Dorsolateral prefrontal cortex (tissue), 120 donors: ENCODE measurements at regions of chr6 and their contacts with region 1.

Region 1: DNA sequence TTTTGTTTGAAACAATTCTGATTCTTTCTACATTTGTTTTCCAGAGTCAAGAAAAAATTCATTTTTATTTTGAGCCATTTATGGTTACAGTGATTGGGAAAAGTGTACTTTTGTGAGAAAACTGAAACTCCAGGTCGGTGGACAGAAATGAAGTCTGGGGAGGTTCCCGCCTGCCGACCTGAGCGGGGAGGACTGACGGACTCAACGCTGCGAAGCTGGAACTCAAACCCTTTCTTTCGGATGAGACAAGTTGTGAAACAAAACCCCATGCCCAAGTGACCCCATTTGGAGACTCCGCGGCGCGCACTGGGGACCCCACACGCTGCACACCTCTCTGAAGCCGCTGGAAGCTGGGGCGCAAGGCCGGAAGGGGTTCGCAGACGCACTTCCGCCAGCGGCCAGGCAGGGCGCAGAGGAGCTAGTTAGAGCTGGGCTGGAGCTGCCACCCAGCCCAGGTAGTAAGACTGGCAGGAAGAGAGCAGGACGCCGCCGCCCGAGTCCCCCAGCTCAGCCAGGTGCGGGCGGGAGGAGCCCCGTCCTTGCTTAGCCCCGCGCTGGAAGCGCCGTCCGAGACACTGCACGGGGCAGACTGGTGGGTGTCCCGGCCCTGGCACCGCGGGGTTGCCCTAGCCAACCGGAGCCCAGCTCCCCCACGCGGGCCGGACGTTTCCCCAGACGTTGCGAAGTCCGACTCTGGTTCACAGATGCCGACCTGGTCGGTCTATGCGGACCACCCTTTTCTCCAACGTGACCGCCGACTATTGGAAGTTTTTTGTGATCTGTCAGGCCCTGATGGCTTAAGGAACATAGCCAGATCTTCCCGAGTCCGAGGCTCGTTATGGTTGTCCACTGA is 19.8 kb upstream of the ZSCAN16 start:
- DNase-seq: peak; percentile 62 to 90 (median 82)
- H3K4me3 ChIP-seq: peak overlapping the region; percentile 62 to 97 (median 84)
- H3K27ac ChIP-seq: peak overlapping the region in 57 of 59 donors; percentile 49 to 97 (median 86)
- H3K27me3 ChIP-seq: no peaks in the 10 kb centered on the region
- CTCF ChIP-seq: peak in 54 of 56 donors; percentile 28 to 71 (median 58)

Region 2: DNA sequence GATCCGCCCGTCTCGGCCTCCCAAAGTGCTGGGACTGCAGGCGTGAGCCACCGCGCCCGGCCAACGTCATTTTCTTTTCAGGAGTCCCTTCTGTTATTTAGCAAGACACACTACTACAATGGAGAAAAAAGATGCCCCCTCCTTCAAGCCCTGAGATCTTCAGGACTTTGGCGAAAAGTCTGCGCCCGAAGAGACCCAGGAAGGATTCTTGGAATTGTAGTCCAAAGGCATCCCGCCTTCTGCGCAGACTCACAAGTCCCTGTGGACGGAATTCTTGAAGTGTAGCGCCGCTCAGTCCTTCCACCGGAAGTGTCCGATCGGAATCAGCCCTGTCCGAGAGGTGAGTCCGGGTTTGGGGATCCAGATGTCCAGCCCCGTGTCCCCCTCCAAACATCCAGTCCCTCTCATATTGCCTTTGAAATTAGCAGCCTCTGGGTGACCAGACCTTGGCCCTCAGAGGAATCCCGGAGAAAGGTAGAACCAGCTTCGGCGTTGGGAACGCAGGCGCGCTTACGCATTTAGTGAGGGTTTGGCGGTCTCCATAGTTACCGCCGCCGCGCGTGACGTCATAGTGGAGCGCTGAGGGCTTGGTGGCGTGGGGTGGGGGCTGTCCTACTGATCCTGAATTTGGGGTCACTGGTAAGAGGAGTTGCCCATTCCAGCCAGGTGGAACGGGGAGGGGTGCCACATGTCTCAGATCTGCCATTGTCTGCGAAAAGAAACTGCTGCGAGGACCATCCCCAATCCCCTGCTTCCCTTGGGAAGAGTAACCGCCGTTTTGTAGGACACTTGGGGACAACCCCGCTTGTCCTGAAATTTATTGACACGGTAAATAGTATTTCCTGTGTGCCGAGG is 23.8 kb before region 1 on chr6:
- intact Hi-C with region 1: loop called in 1 of 2 experiments (anchors 1 kb)
- DNase-seq: peak; percentile 85 to 95 (median 92)
- H3K4me3 ChIP-seq: peak overlapping the region; percentile 61 to 96 (median 83)
- H3K27ac ChIP-seq: peak overlapping the region; percentile 27 to 98 (median 87)
- H3K27me3 ChIP-seq: no peaks in the 10 kb centered on the region
- CTCF ChIP-seq: peak in 30 of 56 donors; percentile 11 to 55 (median 20)

Region 3: DNA sequence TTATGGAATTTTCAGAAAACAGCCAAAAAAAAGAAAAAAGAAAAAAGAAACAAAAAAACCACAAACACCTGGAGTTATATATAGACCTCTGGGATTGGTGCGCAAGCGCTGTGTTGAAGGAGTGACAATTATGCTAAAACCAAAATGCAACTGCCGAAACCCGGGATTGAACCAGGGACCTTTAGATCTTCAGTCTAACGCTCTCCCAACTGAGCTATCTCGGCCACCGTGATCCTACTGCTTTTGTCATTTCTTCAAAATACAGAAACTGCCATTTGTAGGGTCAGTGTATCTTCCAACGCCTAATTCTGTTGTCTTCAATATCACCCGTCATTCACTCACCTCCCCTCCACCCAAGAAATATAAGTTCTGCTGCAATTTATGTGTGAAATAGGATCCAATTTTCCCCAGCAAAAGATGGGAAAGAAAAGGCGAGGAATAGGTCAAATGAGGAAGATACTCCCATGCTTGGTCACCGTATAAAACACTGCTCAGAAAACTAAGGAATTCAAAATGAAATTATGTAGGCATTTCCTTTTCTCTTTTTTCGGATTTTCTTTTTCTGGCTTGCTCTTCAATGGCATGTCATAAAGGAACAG is 703.2 kb after region 1 on chr6:
- intact Hi-C with region 1: no loop called
- DNase-seq: no peak
- H3K4me3 ChIP-seq: no peak overlapping the region
- H3K27ac ChIP-seq: no peak overlapping the region
- H3K27me3 ChIP-seq: peaks cover 21 to 100% (median 94%) of the 10 kb centered on the region in 45 donors
- CTCF ChIP-seq: no peak